Activated B cell treated with CpG ODN at 0.5 μM for 24 hours (primary cell): ENCODE measurements at regions of chr1 and their contacts with region 1.

Region 1: DNA sequence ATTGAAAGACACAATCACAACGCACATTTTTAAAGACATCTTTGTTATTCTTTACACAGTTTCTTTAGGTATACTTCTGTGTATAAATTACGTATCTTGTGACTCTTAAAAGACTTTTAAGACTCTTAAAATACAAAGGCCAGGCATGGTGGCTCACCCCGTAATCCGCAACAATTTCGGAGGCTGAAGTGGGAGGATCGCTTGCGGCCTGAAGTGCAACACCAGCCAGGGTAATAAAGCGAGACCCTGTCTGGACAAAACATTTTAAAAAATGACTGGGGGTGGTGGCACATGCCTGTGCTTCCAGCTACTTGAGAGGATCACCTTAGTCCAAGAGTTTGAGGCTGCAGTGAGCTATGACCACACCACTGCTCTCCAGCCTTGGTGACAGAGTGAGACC is 70.1 kb downstream of the TRIM33 start:
- DNase-seq: no peak
- ATAC-seq: no peak
- H3K4me3 Mint-ChIP-seq: no peak overlapping the region
- H3K27ac Mint-ChIP-seq: no peak overlapping the region
- H3K4me1 Mint-ChIP-seq: peaks cover 6% of the 10 kb centered on the region
- H3K27me3 Mint-ChIP-seq: no peaks in the 10 kb centered on the region
- CTCF ChIP-seq: no peak

Region 2: GRCh38 chr1:114369927-114370326 is 71.0 kb before region 1 on chr1:
- CTCF ChIA-PET with region 1: no interaction called
- POLR2A ChIA-PET with region 1: no interaction called
- intact Hi-C with region 1: no loop called
- DNase-seq: no peak
- ATAC-seq: no peak
- H3K4me3 Mint-ChIP-seq: no peak overlapping the region
- H3K27ac Mint-ChIP-seq: no peak overlapping the region
- H3K4me1 Mint-ChIP-seq: no peaks in the 10 kb centered on the region
- H3K27me3 Mint-ChIP-seq: peaks cover 8% of the 10 kb centered on the region
- CTCF ChIP-seq: no peak

Region 3: DNA sequence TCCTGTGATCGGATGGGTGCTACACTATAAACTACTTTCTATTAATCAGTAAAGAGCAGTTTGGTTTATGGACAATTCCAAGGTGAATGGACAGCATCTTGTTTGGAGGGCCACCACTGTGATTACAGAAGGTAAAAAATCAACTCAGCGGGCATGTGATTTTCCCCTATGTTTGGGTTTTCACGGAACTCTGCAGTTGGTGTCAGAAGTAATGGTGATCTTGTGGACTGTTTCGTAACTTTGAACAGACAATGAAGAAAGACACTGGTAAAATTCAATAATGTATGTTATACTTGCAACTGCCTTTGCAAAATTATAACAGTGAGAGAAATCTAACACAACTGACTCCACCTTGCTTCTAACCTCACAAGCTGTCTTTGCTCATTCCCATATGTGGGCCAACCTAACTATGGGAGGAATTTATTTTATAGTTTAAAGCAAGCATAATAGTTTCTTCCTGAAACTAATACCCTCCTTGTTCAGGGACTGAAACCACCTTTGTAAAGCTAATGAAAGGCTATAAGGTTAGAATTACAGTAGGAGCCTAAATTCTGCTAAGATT is 16.9 kb after region 1 on chr1:
- CTCF ChIA-PET with region 1: no interaction called
- POLR2A ChIA-PET with region 1: no interaction called
- intact Hi-C with region 1: loop called (anchors 2 kb)
- DNase-seq: no peak
- ATAC-seq: no peak
- H3K4me3 Mint-ChIP-seq: no peak overlapping the region
- H3K27ac Mint-ChIP-seq: no peak overlapping the region
- H3K4me1 Mint-ChIP-seq: peaks cover 5% of the 10 kb centered on the region
- H3K27me3 Mint-ChIP-seq: no peaks in the 10 kb centered on the region
- CTCF ChIP-seq: no peak

Region 4: DNA sequence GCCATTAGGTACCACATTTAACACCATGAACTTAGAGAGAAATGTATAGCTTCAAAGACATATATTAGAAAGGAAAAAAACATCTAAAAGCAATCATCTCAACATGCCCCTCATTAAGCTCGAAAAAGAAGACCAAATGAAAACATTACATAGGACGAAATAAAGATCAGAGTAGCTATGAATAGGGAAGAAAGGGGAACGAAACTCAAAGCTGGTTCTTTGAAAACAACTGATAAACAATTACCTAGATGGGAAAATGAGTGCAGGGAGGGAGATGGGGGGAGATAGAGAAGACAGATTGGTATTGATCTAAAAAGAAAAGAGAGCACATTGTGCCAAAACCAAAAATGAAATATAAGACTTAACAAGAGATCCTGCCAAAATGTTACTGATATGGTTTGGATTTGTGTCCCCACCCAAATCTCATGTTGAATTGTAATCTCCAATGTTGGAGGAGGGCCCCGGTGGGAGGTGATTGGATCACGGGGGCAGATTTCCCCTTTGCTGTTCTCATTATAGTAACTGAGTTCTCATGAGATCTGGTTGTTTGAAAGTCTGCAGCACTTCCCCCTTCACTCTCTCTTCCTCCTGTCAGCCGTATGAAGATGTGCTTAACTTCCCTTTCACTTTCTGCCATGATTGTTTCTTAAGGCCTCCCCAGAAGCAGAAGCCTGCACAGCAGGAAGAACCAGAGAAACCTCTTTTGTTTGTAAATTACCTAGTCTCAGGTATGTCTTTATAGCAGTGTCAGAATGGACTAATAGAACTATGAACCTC is 41.5 kb after region 1 on chr1:
- CTCF ChIA-PET with region 1: no interaction called
- POLR2A ChIA-PET with region 1: no interaction called
- intact Hi-C with region 1: loop called (anchors 5 kb)
- DNase-seq: no peak
- ATAC-seq: peak; percentile 99
- H3K4me3 Mint-ChIP-seq: peak overlapping the region; percentile 72
- H3K27ac Mint-ChIP-seq: peak overlapping the region; percentile 91
- H3K4me1 Mint-ChIP-seq: peaks cover 54% of the 10 kb centered on the region
- H3K27me3 Mint-ChIP-seq: no peaks in the 10 kb centered on the region
- CTCF ChIP-seq: no peak